Calu3 (cell line): ENCODE measurements at regions of chr17 and their contacts with region 1.

Region 1: DNA sequence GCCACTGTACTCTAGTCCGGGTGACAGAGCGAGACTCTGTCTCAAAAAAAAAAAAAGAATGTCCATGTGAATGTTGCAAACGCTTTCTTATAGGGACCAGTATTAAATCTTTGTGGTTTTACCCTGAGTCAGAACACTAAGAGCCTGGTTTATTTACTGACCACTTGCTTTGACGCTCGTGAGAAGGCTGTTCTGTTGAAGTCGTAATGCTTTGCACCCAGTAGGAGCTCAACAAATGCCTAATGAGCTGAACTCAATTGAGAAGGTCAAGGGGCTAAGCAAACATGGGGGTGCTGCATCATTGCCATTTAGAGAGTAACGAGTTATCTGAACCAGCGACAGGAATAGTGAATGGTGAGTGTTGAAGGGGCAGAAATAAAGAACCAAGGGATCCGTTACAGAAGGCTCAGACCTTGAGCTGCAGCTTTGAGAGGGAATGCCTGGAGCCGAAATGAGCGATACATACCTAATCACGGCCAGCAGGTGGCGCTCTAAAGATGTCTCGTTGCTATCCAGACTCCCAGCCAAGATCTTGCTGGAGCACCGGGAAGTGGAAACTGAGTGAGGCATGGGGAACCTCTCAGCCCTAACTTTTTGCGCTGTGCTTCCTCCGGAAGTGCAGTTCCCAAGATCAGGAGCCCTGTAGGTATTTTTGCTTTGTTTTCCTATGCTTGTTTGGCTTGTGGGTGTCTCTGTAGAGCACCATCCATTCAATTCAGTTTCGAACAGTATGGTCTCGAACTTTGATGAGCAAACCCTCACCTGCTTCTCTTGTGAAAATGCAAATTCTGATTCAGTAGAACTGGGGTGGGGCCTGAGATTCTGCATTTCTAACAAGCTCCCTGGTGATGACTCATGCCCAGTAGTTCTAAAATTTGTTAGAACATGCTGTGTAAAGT is 12.6 kb upstream of the RNF222 start:
- DNase-seq: peak; percentile 83
- H3K4me3 Mint-ChIP-seq: no peak overlapping the region
- H3K27ac Mint-ChIP-seq: no peak overlapping the region
- H3K4me1 Mint-ChIP-seq: peaks cover 8% of the 10 kb centered on the region
- H3K27me3 Mint-ChIP-seq: no peaks in the 10 kb centered on the region
- CTCF ChIP-seq: peak; percentile 53

Region 2: GRCh38 chr17:8383143-8383822 is 26.9 kb before region 1 on chr17 and contains the start of gene RPL26:
- CTCF ChIA-PET with region 1: interaction called, 14 read pairs
- intact Hi-C with region 1: no loop called
- DNase-seq: peak; percentile 89
- H3K4me3 Mint-ChIP-seq: peak within 1 kb of the TSS; percentile 89
- H3K27ac Mint-ChIP-seq: peak within 1 kb of the TSS; percentile 95
- H3K4me1 Mint-ChIP-seq: peaks cover 24% of the 10 kb centered on the region
- H3K27me3 Mint-ChIP-seq: no peaks in the 10 kb centered on the region
- CTCF ChIP-seq: peak; percentile 92
- total RNA-seq, gene RPL26: 739 and 842 TPM in 2 replicates

Region 3: GRCh38 chr17:8488901-8489300 is 78.7 kb after region 1 on chr17:
- CTCF ChIA-PET with region 1: no interaction called
- intact Hi-C with region 1: no loop called
- DNase-seq: no peak
- H3K4me3 Mint-ChIP-seq: no peak overlapping the region
- H3K27ac Mint-ChIP-seq: no peak overlapping the region
- H3K4me1 Mint-ChIP-seq: no peaks in the 10 kb centered on the region
- H3K27me3 Mint-ChIP-seq: no peaks in the 10 kb centered on the region
- CTCF ChIP-seq: no peak